Heart right ventricle (tissue), 16 donors: ENCODE measurements at regions of chr12 and their contacts with region 1.

Region 1: GRCh38 chr12:132153501-132154340 is 9.5 kb downstream of the NOC4L start:
- DNase-seq: peak; percentile 42 to 63
- ATAC-seq: peak; percentile 88 to 95 (median 93)
- H3K4me3 ChIP-seq: peak overlapping the region in 7 of 10 donors; percentile 3 to 47 (median 38)
- H3K27ac ChIP-seq: no peak overlapping the region
- H3K4me1 ChIP-seq: peaks cover 0 to 9% (median 6%) of the 10 kb centered on the region in 9 donors
- H3K27me3 ChIP-seq: no peaks in the 10 kb centered on the region
- CTCF ChIP-seq: peak; percentile 88 to 96 (median 93)

Region 2: DNA sequence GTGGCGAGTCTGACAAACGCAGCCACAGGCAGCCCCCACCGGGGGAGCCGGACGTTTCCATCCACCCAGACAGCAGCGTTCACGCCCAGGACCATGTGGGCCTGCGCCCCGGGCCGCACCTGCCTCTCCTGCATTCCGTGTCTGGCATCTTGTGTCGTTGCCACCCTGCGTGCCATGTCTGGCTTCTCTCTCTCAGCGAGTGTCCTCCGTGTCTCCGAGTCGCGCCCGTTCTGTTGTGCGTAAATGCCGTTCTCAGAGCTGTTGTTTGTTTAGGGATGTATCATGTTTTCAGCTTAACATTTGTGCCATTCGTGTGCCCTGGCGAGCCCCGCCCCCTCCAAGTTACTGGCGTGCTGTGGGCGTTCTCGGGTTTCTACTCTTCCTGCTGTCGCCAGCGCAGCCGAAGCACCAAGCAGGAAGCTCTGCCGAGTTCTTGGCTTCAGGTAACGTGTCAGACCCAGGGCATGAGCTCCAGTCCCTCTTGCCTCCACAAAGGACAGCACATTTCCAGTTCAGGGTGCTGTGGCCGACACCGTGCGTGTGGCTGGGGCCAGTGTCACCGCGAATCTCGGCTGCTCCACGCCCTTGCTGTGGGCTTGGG is 25.2 kb after region 1 on chr12:
- intact Hi-C with region 1: no loop called
- DNase-seq: peak in 1 of 2 donors; percentile 10
- ATAC-seq: no peak
- H3K4me3 ChIP-seq: no peak overlapping the region
- H3K27ac ChIP-seq: no peak overlapping the region
- H3K4me1 ChIP-seq: no peaks in the 10 kb centered on the region
- H3K27me3 ChIP-seq: peaks cover 0 to 61% (median 51%) of the 10 kb centered on the region in 7 donors
- CTCF ChIP-seq: no peak

Region 3: DNA sequence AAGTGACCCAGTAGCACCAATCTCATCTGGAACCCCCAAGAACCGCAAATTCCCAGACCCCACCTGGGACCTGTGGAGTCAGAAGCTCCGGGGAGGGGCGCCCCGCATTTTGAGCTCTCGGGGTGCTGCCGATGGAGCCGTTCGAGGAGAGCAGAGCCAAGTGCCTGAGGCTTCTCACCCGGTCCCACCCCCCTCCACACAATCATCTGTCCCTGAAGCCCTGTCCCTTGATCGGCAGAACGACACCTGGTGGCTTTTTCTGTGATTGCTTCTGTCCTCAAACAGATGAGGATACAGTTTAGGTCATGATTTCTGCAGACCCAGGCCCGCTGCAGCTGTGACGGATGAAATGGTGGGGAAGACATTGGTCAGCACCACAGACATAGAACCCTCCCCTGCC is 65.2 kb after region 1 on chr12:
- intact Hi-C with region 1: loop called in 4 of 10 experiments (anchors 2 to 10 kb)
- DNase-seq: no peak
- ATAC-seq: no peak
- H3K4me3 ChIP-seq: no peak overlapping the region
- H3K27ac ChIP-seq: no peak overlapping the region
- H3K4me1 ChIP-seq: no peaks in the 10 kb centered on the region
- H3K27me3 ChIP-seq: peaks cover 0 to 44% (median 32%) of the 10 kb centered on the region in 7 donors
- CTCF ChIP-seq: peak in 7 of 9 donors; percentile 15 to 38 (median 34)

Region 4: GRCh38 chr12:132414634-132415326 is 261.1 kb after region 1 on chr12:
- intact Hi-C with region 1: loop called in 3 of 10 experiments (anchors 10 kb)
- DNase-seq: peak; percentile 78 to 80
- ATAC-seq: peak; percentile 91 to 97 (median 94)
- H3K4me3 ChIP-seq: no peak overlapping the region
- H3K27ac ChIP-seq: no peak overlapping the region
- H3K4me1 ChIP-seq: peaks cover 0 to 12% (median 5%) of the 10 kb centered on the region in 9 donors
- H3K27me3 ChIP-seq: peaks cover 8 to 72% (median 64%) of the 10 kb centered on the region in 7 donors
- CTCF ChIP-seq: peak; percentile 74 to 97 (median 95)

Region 5: DNA sequence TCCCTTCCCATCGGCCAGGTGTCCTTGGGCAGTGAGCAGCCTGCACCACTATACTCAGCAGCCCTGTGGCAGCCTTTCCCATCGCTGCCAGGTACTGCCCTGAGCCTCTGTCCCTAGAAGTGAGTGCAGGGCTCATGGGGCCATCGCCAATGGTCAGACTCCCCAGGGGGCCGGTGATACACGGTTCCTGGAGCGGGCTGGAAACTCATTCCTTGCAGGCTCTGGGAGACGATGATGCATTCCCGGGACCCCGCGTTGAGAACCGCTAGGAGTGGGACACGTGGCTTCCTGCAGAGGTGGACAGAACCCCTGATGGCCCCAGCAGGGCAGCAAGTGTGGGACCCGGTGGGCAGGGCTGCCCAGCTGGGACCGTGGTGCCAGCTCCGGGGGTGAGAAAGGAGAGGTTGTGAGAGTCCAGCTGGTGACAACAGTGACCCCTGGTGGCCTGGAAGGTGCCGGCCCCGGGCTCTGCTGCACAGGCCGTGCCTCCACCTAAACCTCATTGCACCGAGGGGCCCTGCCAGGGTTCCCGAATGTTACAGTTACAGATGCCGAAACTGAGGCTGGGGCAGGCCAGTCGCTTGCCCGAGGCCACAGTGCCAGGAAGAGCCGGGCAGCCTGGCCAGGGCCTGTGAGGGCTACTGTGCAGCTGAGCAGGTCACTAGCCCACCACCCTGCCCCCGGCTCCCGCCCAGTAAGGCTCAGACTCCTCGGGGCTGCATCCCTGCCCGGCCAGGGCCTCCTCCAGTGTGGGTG is 370.0 kb after region 1 on chr12:
- intact Hi-C with region 1: loop called in 2 of 10 experiments (anchors 10 kb)
- DNase-seq: peak; percentile 66 to 71
- ATAC-seq: peak; percentile 61 to 77 (median 68)
- H3K4me3 ChIP-seq: no peak overlapping the region
- H3K27ac ChIP-seq: no peak overlapping the region
- H3K4me1 ChIP-seq: peaks cover 0 to 39% (median 24%) of the 10 kb centered on the region in 9 donors
- H3K27me3 ChIP-seq: no peaks in the 10 kb centered on the region
- CTCF ChIP-seq: peak; percentile 68 to 91 (median 86)

Region 6: GRCh38 chr12:132614861-132615578 is 461.3 kb after region 1 on chr12:
- intact Hi-C with region 1: loop called (anchors 2 to 10 kb)
- DNase-seq: peak; percentile 83 to 85
- ATAC-seq: peak; percentile 77 to 95 (median 90)
- H3K4me3 ChIP-seq: no peak overlapping the region
- H3K27ac ChIP-seq: no peak overlapping the region
- H3K4me1 ChIP-seq: peaks cover 0 to 12% (median 9%) of the 10 kb centered on the region in 9 donors
- H3K27me3 ChIP-seq: peaks cover 27 to 71% (median 62%) of the 10 kb centered on the region in 7 donors
- CTCF ChIP-seq: peak; percentile 79 to 95 (median 90)